Lower leg skin (tissue), 4 donors: ENCODE measurements at regions of chr10 and their contacts with region 1.

Region 1: GRCh38 chr10:93471110-93471651 is 11.0 kb downstream of the MYOF start:
- DNase-seq: peak in 1 of 2 donors; percentile 53
- H3K4me3 ChIP-seq: no peak overlapping the region
- CTCF ChIP-seq: no peak
- POLR2A ChIP-seq: no peak

Region 2: DNA sequence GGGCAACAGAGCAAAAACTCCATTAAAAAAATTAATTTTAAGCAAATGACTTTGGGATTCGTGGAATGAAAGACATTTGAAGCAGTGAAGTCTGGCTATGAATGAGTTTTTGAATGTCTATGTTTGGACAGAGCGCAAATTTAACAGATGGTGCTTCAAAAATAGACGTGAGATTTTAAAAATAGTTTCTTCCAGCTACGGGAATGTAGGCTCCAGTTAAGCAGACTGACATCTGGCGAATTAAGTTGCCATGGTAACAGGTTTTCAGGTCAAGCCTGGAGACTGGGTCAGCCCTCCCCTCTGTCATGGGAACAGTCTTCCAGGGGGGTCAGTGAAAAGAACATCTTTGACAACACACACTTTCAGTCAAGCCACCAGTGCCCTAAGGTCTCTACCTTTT is 51.1 kb before region 1 on chr10:
- intact Hi-C with region 1: loop called (anchors 10 kb)
- DNase-seq: no peak
- H3K4me3 ChIP-seq: no peak overlapping the region
- CTCF ChIP-seq: no peak
- POLR2A ChIP-seq: no peak